Activated CD4-positive, alpha-beta T cell treated with anti-CD3 and anti-CD28 coated beads, Interleukin-2, amount 10 ng/mL, durations not matched to agents 24 days and 14 days (primary cell): ENCODE measurements at regions of chr19 and their contacts with region 1.

Region 1: DNA sequence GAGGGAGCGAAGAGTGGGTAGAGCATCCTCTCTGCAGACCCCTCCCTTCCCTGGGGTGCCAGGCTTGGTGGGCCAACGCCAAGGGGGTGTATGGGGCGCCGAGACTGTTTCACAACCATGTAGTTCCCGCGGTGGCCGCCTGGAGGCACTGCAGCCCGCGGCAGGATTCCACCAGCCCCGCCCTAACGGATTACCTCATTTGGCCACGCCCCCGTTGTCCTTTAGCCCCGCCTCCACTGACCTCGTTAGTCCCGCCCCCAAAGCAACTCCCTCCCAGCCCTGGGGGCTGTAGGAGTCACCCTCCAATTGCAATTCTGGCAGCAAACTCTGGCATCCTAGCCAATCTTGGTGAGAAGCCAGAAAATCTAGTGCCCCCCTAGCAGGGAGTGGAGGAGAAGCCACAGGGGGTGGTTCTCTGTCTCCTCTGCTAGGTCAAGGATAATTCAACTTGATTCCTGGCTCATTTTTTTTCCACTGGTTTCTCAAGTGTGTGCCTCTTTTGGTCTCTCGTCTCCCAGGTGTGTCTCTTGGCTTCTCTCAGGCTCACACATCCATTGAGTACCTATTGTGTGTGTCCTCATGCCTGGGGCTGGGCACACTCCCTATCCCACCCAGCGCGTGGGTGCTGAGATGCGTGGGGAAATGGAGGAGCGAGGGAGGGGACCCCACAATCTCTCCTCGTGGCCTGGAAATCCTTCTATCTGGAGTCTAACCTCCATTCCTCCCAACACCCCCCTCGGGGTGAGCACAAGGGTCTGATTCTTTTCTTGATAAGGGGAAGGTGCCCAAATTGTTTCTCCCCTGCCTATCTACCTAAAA is 2.0 kb downstream of the OLFM2 start:
- DNase-seq: peak; percentile 94
- H3K4me3 Mint-ChIP-seq: no peak overlapping the region
- H3K27ac Mint-ChIP-seq: no peak overlapping the region
- H3K4me1 Mint-ChIP-seq: peaks cover 11% of the 10 kb centered on the region
- H3K27me3 Mint-ChIP-seq: peaks cover 46% of the 10 kb centered on the region

Region 2: GRCh38 chr19:10000171-10000826 is 66.0 kb after region 1 on chr19:
- intact Hi-C with region 1: loop called (anchors 1 kb)
- DNase-seq: peak; percentile 89
- H3K4me3 Mint-ChIP-seq: no peak overlapping the region
- H3K27ac Mint-ChIP-seq: no peak overlapping the region
- H3K4me1 Mint-ChIP-seq: peaks cover 6% of the 10 kb centered on the region
- H3K27me3 Mint-ChIP-seq: peaks cover 17% of the 10 kb centered on the region

Region 3: DNA sequence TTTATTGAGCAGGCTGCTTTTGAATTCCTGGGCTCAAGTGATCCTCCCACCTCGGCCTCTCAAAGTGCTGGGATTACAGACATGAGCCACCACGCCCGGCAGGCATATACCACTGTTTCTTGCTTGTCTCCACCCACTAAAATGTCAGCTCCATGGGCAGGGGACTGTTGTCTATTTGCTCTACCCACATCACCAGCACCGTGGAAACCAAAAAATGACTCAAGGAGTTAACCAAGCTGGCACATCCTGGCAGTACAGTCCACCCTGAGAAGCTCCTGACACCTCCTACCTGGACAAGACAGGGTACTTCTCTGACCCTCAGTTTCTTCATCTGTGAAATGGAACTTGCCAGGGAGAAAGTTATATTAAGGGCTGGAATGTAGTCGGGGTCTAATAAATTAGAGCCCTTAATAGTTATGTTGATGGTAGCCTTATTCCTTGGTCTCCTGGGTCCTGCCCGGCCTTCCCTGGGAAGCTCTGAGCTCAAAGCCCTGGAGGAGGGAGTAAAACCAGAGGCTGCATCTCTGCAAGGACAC is 92.9 kb after region 1 on chr19:
- intact Hi-C with region 1: loop called (anchors 1 kb)
- DNase-seq: no peak
- H3K4me3 Mint-ChIP-seq: no peak overlapping the region
- H3K27ac Mint-ChIP-seq: no peak overlapping the region
- H3K4me1 Mint-ChIP-seq: peaks cover 3% of the 10 kb centered on the region
- H3K27me3 Mint-ChIP-seq: peaks cover 13% of the 10 kb centered on the region

Region 4: DNA sequence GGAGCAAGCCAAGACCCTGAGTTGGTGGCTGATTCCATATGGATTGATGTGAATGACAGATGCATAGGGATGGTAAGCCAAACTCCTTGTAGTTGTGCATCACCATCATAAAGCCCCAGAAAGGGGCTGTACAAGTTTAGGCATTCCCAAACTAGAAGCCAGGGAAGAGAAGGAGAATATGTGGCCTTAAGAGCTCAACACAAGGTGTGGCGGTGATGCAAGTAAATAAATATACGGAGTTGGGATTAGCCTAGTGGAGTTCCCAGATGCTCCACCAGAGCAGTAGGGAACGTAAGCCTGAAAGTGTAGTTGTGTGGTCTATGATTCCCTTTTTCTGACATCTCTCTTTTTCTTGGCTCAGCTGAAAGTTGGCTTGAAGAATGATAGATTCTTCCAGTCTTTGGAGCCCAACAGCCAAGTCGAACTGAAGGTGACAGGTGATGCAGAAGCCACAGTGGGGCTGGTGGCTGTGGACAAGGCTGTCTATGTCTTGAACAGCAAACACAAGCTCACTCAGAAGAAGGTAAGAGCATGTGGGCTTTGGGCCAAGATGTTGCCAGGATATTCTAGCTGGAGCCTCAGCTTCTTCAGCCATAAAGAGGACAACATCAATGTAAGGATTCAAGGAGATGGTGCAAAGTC is 109.1 kb after region 1 on chr19:
- intact Hi-C with region 1: no loop called
- DNase-seq: no peak
- H3K4me3 Mint-ChIP-seq: no peak overlapping the region
- H3K27ac Mint-ChIP-seq: no peak overlapping the region
- H3K4me1 Mint-ChIP-seq: no peaks in the 10 kb centered on the region
- H3K27me3 Mint-ChIP-seq: peaks cover 7% of the 10 kb centered on the region

Region 5: GRCh38 chr19:10112895-10113591 is 178.7 kb after region 1 on chr19:
- intact Hi-C with region 1: loop called (anchors 10 kb)
- DNase-seq: peak; percentile 90
- H3K4me3 Mint-ChIP-seq: peak overlapping the region; percentile 58
- H3K27ac Mint-ChIP-seq: peak overlapping the region; percentile 91
- H3K4me1 Mint-ChIP-seq: peaks cover 39% of the 10 kb centered on the region
- H3K27me3 Mint-ChIP-seq: no peaks in the 10 kb centered on the region

Region 6: GRCh38 chr19:10388957-10389356 is 454.6 kb after region 1 on chr19:
- intact Hi-C with region 1: loop called (anchors 5 kb)
- DNase-seq: peak; percentile 93
- H3K4me3 Mint-ChIP-seq: no peak overlapping the region
- H3K27ac Mint-ChIP-seq: no peak overlapping the region
- H3K4me1 Mint-ChIP-seq: peaks cover 9% of the 10 kb centered on the region
- H3K27me3 Mint-ChIP-seq: no peaks in the 10 kb centered on the region